ENCODE measurements at regions of chr6 and their contacts with region 1.

Region 1: DNA sequence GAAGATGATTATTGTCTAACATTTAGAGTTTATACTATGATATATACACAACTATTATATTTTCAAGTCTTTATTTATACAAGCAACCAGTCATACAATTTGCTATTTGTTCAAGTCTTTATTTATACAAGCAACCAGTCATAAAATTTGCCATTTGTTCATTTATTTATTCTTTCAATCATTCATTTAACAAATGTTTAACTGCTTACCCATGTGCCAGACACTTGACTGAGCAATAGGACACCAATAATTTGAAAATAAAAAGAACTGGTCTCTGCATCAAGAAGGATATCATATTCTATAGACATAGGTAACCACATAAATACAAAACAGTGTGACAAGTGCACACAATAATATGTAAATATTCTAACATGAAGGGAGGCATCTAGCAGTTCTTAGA is 20.3 kb downstream of the GRIK2 start:
- DNase-seq: no peak
- H3K4me3 ChIP-seq: no peak overlapping the region
- CTCF ChIP-seq: no peak
- POLR2A ChIP-seq: no peak

Region 2: DNA sequence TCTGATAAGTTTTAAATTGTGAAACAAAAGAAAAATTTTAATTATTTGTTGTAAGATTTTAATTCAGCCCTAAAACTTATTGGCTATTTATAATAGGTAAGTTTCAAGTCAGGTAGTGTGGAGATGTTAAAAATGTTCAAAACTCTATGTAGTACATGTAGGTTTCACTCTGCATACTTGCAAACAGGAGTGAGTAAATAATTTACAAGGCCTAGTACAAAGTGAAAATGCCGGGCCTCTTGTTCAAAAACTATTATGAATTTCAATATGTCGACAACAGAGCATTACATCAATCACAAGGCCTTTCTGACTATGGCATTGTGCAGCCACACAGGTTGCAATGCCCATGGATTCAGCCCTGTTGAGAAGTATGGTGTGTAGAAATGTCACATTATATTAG is 101.1 kb before region 1 on chr6:
- intact Hi-C with region 1: loop called (anchors 5 kb)
- DNase-seq: no peak
- H3K4me3 ChIP-seq: no peak overlapping the region
- CTCF ChIP-seq: no peak
- POLR2A ChIP-seq: no peak

Region 3: GRCh38 chr6:101344885-101345284 is 68.9 kb before region 1 on chr6:
- intact Hi-C with region 1: no loop called
- DNase-seq: no peak
- H3K4me3 ChIP-seq: no peak overlapping the region
- CTCF ChIP-seq: no peak
- POLR2A ChIP-seq: no peak

Region 4: DNA sequence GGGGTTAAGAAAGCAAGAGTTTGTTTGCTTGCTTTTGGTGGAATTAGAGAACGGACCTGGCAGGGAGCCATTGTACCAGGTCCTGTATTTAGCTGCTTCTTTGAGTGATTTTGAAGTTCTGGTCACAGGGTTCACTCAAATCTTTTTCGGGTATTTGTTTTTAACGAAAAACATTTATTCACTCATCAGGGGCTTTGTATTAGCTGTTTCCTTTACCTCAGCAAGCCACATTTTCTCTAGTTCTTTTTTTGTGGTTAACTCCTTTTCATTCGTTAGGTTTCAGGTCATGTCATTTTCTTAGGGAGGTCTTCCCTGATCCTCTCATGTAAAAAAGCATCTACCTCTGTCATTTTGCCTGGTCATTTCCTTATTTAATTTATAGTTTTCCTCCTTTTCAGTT is 1481.9 kb after region 1 on chr6:
- intact Hi-C with region 1: no loop called
- DNase-seq: no peak
- H3K4me3 ChIP-seq: no peak overlapping the region
- CTCF ChIP-seq: no peak
- POLR2A ChIP-seq: no peak

Measured in lower leg skin (tissue), 4 donors.